ENCODE measurements at regions of chr10 and their contacts with region 1.

Region 1: GRCh38 chr10:132762267-132762666 is 23.7 kb downstream of the NKX6-2 start:
- DNase-seq: no peak
- H3K4me3 Mint-ChIP-seq: no peak overlapping the region
- H3K27ac Mint-ChIP-seq: peak overlapping the region; percentile 4
- H3K4me1 Mint-ChIP-seq: peaks cover 11% of the 10 kb centered on the region
- H3K27me3 Mint-ChIP-seq: no peaks in the 10 kb centered on the region

Region 2: DNA sequence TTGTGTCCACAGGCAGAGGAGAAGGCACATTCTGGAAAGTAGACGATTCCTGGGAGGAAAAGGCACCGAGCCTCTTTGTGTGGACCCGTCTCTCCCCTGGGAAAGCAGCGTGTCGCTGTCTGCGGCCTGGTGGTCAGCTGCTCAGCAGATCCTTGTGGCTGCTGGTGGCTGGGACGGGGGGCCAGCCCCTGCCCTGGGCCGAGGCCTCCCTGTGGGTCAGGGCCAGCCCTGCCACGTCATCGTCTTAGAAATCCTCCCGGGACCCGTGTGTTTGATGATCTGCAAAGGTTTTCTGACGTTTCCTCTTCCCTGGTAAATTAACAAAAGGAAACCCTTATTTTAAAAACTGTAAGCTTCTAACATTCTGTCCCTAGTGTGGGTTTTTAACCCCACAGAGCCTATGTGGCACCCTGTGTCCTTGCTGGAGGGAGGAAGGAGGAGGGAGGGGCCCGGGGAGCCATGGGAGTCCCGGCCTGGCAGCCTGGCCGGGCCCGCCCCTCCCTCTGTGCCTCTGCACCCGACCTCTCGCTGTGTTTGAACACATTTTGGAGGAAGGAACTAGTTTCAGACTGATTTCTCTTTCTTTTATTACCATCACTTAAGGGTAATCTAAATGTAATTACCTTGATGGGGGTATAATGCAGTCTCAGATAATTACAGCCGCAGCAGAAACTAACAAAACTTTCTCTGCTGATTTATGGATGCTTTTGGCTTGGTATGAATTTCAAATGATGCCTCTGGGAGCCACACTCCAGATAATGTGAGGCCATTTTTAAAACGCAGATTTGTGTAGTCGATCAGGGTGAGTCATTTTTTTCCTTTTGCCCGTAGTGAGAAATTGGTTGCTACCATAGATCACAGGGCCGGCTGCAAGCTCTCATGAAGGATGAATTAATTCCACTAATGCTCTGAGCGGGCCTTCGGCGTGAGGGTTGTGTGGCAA is 61.8 kb before region 1 on chr10:
- intact Hi-C with region 1: no loop called
- DNase-seq: no peak
- H3K4me3 Mint-ChIP-seq: no peak overlapping the region
- H3K27ac Mint-ChIP-seq: no peak overlapping the region
- H3K4me1 Mint-ChIP-seq: peaks cover 9% of the 10 kb centered on the region
- H3K27me3 Mint-ChIP-seq: no peaks in the 10 kb centered on the region

Region 3: DNA sequence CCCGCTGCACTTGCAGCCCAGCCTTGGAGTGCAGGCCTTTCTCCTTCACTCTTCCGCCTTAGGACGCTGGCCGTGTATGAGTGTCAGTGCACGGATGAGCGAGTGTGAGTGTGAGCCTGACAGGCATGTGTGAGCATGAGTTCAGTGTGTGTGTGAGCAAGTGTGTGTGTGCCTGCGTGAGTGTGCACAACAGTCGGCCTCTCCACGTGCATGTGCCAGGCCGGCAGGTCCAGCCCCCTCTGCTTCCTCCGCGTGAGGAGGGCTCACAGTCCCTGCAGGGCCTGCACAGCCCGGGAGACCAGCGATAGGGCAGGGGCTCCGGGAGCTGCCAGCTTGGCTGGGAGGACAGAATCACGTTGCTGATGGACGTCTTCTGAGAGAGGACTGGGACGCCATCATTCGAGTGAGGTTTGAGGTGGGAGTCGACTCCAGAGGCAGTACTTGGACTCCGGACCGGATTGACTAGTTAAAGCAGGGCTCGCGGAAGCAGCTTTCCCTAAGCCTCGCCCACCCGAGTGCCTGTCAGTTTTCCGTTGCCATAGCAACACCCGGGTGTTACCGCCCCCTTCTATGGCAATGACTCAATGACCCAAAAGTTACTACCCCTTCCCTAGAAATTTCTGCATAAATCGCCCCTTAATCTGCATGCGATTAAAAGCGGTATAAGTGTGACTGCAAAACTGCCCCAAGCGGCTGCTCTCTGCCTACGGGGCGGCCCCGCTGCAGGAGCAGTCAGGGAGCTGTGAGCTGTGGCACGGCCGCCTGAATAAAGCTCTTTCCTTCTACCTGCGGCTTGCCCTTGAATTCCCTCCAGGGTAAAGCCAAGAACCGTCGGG is 199.7 kb after region 1 on chr10:
- intact Hi-C with region 1: loop called (anchors 5 kb)
- DNase-seq: peak; percentile 54
- H3K4me3 Mint-ChIP-seq: peak overlapping the region; percentile 90
- H3K27ac Mint-ChIP-seq: peak overlapping the region; percentile 68
- H3K4me1 Mint-ChIP-seq: peaks cover 16% of the 10 kb centered on the region
- H3K27me3 Mint-ChIP-seq: peaks cover 11% of the 10 kb centered on the region

Region 4: DNA sequence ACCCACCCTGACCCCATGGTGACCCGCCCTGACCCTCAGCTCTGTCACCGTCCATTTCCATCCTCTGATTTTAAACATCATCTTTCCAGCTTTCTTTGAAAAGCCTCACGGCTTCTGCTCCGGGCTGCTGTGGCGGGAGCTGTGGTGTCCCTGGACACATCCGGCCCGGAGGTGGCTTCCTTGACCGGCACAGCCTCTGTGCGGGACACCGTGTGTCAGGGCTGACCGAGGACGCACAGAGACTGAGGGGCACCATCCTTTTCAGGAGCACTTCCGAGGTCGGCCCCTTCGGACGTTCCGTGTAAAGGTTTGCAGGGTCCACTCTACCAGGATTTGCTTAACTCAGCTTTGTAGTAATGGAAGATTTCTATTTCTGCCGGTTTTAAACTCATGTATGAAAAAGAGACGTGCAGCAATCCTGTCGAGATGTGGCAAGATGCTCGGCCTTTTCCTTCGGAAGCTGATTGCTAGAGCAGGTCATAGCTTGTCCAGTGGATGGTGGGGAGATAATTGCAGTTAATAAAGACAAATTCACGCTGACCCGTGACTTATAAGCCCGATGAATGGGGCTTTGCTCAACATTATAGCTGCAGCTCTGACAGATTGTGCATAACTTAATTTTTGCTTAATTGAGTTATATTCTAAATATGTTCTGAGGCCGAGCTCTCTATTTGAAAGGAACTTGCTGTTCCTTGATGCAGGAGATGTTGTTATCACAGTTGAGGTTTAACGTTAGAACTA is 234.5 kb after region 1 on chr10:
- intact Hi-C with region 1: no loop called
- DNase-seq: no peak
- H3K4me3 Mint-ChIP-seq: no peak overlapping the region
- H3K27ac Mint-ChIP-seq: no peak overlapping the region
- H3K4me1 Mint-ChIP-seq: no peaks in the 10 kb centered on the region
- H3K27me3 Mint-ChIP-seq: no peaks in the 10 kb centered on the region

Measured in activated T-helper 1 cell treated with anti-CD3 and anti-CD28 coated beads, Interleukin-12 subunit alpha, Interleukin-12 subunit beta, Interleukin-2, Interleukin-4 antibody, amounts not matched to agents 30 ng/mL and 10 ng/mL and 1 ng/mL, durations not matched to agents 14 hours and 24 hours and 36 hours (primary cell).